ENCODE measurements at regions of chr3 and their contacts with region 1.

Region 1: GRCh38 chr3:140953028-140953960 is 11.7 kb downstream of the SLC25A36 start:
- DNase-seq: no peak
- ATAC-seq: no peak
- H3K4me3 ChIP-seq: no peak overlapping the region
- H3K27ac ChIP-seq: peak overlapping the region in 1 of 12 donors; percentile 19
- H3K4me1 ChIP-seq: peaks cover 3 to 85% (median 36%) of the 10 kb centered on the region in 12 donors
- H3K27me3 ChIP-seq: no peaks in the 10 kb centered on the region
- CTCF ChIP-seq: no peak
- POLR2A ChIP-seq: no peak

Region 2: GRCh38 chr3:140906785-140907184 is 46.5 kb before region 1 on chr3:
- intact Hi-C with region 1: loop called in 1 of 10 experiments (anchors 10 kb)
- DNase-seq: no peak
- ATAC-seq: no peak
- H3K4me3 ChIP-seq: no peak overlapping the region
- H3K27ac ChIP-seq: no peak overlapping the region
- H3K4me1 ChIP-seq: peaks cover 0 to 10% (median 0%) of the 10 kb centered on the region in 12 donors
- H3K27me3 ChIP-seq: no peaks in the 10 kb centered on the region
- CTCF ChIP-seq: no peak
- POLR2A ChIP-seq: no peak

Region 3: GRCh38 chr3:140922634-140923033 is 30.7 kb before region 1 on chr3:
- intact Hi-C with region 1: loop called in 1 of 10 experiments (anchors 5 kb)
- DNase-seq: no peak
- ATAC-seq: no peak
- H3K4me3 ChIP-seq: no peak overlapping the region
- H3K27ac ChIP-seq: no peak overlapping the region
- H3K4me1 ChIP-seq: peaks cover 0 to 21% (median 0%) of the 10 kb centered on the region in 12 donors
- H3K27me3 ChIP-seq: peaks cover 0 to under 1% (median 0%) of the 10 kb centered on the region in 9 donors
- CTCF ChIP-seq: peak in 9 of 12 donors; percentile 14 to 41 (median 31)
- POLR2A ChIP-seq: no peak